K562 (cell line): ENCODE measurements at regions of chr19 and their contacts with region 1.

Region 1: DNA sequence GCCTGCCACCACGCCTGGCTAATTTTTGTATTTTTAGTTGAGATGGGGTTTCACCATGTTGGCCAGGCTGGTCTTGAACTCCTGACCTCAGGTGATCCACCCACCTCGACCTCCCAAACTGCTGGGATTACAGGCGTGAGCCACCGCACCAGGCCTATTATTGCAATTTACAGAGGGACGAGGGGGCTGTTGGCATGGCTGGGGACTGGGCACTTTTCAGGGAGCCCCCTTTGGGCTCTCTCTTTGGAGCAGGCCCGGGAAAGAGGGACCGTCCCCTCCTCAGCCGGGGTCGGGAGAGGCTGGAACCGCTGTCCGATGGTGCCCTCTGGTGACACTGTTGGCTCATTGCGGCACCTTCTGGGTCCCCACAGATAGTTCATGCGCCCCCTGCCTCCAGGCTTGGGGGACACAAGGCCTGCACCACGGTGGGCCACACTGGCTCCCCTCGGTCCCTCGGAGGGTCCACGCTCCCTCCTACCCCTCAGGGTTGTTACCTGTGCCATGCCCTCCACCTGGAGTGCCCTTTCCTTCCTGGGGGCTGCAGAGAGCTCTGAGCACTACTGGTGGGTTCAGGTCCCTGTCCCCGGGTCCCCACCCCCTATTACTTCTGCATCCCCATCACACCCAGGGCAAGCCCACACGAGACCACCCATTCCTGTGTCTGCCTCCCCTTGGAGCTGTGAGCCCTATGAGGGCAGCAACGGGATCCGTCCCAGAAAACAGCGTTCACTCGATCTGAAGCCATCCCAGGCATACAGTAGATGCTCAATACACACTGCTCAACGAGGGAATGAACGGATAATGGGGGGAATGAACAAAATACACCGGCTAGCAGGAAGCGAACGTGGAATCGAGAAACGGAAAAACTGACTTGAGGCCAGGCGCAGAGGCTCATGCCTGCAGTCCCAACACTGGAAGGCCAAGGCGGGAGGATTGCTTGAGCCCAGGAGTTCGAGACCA is 12.5 kb downstream of the FEM1A start:
- DNase-seq: peak; percentile 81 to 85 (median 83)
- ATAC-seq: peak; percentile 94
- H3K4me3 ChIP-seq: no peak overlapping the region
- H3K27ac ChIP-seq: no peak overlapping the region
- H3K4me1 ChIP-seq: peaks cover 0 to 14% of the 10 kb centered on the region in 2 experiments; a peak in 3 of 5 replicates
- H3K27me3 ChIP-seq: no peaks in the 10 kb centered on the region
- CTCF ChIP-seq: peak; percentile 94 to 99 (median 99)
- EP300 ChIP-seq: no peak
- POLR2A ChIP-seq: no peak
- RAD21 ChIP-seq: peak; percentile 70 to 92

Region 2: DNA sequence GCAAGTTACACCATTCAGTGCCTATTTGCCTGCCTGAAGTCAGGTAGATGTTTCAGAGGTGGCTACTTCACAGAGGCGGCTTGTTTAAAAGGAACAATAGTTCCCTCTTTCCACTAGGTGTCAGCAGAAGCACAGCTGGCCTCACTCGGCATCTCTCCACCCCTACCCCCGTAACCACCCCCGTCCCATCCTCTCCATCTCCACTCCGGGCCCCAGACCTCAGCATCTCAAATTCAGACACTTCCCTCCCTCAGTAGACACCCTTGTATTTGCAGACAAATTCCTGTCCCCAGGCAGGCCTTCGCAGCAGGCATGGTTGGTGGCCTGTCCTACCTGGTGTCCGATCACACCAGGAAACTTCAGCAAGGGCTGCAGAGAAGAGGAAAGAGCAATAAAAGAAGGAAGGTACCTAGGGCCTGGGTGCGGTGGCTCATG is 71.3 kb before region 1 on chr19:
- CTCF ChIA-PET with region 1: interaction called, 35 read pairs
- POLR2A ChIA-PET with region 1: no interaction called
- in situ Hi-C with region 1: no loop called
- intact Hi-C with region 1: loop called (anchors 1 kb)
- DNase-seq: peak; percentile 63 to 75 (median 72)
- ATAC-seq: peak; percentile 93
- H3K4me3 ChIP-seq: no peak overlapping the region
- H3K27ac ChIP-seq: no peak overlapping the region
- H3K4me1 ChIP-seq: peaks cover 2 to 5% of the 10 kb centered on the region in 2 experiments; a peak in 2 of 5 replicates
- H3K27me3 ChIP-seq: peaks cover 13% of the 10 kb centered on the region in 2 experiments; a peak in 4 of 5 replicates
- CTCF ChIP-seq: peak; percentile 69 to 90 (median 89)
- EP300 ChIP-seq: no peak
- POLR2A ChIP-seq: no peak
- RAD21 ChIP-seq: peak; percentile 67 to 81

Region 3: DNA sequence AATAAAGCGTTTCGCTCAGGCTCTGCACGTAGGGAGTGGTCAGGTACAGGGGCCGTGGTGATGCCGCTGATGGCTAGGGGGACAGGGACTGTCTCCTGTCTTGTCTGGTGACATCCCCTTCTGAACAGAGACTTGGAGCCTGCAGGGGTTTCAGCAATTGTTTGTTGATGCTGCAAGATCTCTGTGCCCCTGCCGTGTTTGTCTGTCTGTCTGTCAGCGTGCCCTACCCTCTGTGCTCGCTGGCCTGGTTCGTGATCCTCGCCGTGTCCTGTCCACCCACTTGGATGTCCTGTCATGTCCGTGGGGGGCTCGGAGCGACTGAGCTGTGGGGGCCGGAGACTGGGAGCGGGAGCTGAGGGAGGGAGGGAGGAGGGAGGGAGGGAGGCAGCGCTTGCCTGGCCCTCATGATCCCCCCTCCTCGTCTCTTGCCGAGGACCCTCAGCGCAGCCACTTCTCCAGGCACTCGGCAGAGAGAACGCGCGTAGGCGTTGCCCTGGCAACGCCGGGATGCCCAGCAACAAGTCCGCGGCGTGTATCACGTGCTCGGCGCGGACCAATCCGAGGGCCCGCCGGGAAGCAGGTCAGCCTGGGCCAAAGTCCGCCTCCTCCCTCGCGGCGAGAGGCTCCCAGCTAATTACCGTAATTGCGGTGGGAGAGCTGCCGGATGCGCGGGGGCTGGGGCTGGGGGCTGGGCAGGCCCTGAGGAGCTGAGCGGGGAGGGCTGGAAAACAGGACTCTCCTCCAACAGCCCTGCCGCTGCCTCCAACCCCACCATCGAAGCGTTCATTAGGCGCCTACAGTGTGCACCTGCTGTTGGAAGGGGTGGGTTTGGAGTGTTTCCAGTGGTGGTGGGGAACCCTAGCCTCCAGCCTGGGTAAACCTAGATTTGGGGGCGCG is 44.4 kb before region 1 on chr19:
- CTCF ChIA-PET with region 1: no interaction called
- POLR2A ChIA-PET with region 1: no interaction called
- in situ Hi-C with region 1: no loop called
- intact Hi-C with region 1: no loop called
- DNase-seq: peak; percentile 91 to 100 (median 100)
- ATAC-seq: peak; percentile 100
- H3K4me3 ChIP-seq: no peak overlapping the region; the same call in 1 of the 2 replicates
- H3K27ac ChIP-seq: no peak overlapping the region
- H3K4me1 ChIP-seq: peaks cover 0 to 10% of the 10 kb centered on the region in 2 experiments; a peak in 3 of 5 replicates
- H3K27me3 ChIP-seq: peaks cover 10 to 65% of the 10 kb centered on the region in 2 experiments; a peak in 4 of 5 replicates
- CTCF ChIP-seq: no peak
- EP300 ChIP-seq: no peak
- POLR2A ChIP-seq: no peak
- RAD21 ChIP-seq: no peak

Region 4: DNA sequence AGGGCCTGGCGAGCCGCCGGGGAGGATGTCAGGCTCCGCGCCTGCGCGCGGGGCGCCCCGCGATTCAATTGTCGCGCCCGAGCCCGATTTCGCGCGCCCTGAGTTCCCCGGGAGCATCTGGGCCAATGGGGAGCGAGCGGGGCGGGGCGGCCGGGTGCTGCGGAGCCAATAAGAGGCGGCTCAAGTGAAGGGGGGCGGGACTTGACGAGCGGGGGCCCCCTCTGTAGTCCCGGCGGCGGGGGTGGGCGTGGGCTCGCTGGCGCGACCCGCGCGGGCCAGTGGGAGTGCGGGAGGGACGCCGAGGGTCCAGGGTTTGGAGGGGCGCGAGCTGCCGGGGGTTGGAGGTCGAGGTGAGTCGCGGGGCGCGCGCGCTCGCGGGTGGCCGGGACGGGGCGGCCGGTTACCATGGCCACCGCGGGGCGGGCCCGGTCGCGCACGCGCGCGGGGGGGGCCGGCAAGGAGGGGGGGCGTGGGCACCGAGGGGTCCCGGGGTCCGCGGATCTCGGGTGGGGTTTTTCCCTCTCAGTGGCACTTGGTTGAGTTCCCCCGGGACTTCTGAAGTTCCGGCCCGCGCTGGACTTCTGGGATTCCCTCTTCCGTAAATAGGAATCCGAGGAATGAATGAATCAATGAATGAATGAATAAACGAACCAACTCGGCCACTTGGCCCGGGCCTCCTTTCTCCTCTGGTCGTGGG is 106.0 kb after region 1 on chr19:
- CTCF ChIA-PET with region 1: interaction called, 37 read pairs
- POLR2A ChIA-PET with region 1: interaction called, 4 read pairs
- in situ Hi-C with region 1: loop called (anchors 5 kb)
- intact Hi-C with region 1: loop called (anchors 1 kb)
- DNase-seq: peak; percentile 96 to 98 (median 96)
- ATAC-seq: peak; percentile 94
- H3K4me3 ChIP-seq: peak overlapping the region; percentile 93
- H3K27ac ChIP-seq: peak overlapping the region; percentile 87
- H3K4me1 ChIP-seq: peaks cover 33 to 46% of the 10 kb centered on the region in 2 experiments
- H3K27me3 ChIP-seq: no peaks in the 10 kb centered on the region
- CTCF ChIP-seq: no peak
- EP300 ChIP-seq: no peak
- POLR2A ChIP-seq: no peak
- RAD21 ChIP-seq: no peak

Region 5: DNA sequence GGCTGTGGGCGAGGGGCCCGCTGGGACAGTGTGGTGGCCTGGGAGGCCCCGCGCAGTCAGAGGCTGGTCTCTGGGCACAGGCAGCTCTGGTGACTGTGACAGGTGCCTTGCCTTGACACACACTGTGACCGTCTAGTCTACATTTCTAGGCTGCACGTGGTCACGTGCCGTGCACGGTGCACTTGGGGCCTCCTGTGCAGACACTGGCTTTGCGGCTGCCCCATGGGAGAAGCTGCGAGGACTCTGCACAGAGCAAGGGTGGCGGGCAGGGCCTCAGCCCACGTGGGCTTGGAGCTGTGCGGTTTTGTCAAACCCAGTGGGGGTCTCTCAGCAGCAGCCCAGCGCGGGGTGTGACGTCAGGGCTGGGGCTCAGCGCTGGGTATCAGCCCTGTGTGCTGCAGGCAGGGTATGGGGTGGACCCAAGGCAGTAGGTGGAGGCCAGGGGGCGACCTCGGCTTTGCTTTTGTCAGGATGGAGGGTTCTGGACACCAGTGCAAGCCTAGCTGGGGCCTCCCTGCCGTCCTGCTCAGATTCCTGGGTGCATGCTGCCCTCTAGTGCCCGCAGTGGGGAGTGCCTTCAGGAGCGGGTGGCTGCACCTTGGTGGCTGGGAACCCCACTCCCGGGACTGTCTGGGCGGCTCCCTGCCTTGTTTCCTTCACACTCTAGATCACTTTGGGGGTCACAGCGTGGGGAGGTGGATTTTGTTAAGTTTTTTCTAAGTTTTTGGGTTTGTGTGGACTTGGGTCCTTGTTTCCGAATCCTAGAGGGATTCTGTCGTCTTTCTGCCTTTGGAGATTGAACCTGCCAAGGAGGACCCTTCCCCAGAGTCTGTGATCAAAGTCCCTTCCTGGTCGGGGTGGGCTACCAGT is 227.4 kb after region 1 on chr19:
- CTCF ChIA-PET with region 1: interaction called, 47 read pairs
- POLR2A ChIA-PET with region 1: no interaction called
- in situ Hi-C with region 1: loop called (anchors 5 kb)
- intact Hi-C with region 1: loop called (anchors 1 kb)
- DNase-seq: peak; percentile 85 to 92 (median 90)
- ATAC-seq: peak; percentile 97
- H3K4me3 ChIP-seq: no peak overlapping the region
- H3K27ac ChIP-seq: no peak overlapping the region
- H3K4me1 ChIP-seq: peaks cover 0 to 46% of the 10 kb centered on the region in 2 experiments; a peak in 3 of 5 replicates
- H3K27me3 ChIP-seq: no peaks in the 10 kb centered on the region
- CTCF ChIP-seq: peak; percentile 92 to 94 (median 94)
- EP300 ChIP-seq: no peak
- POLR2A ChIP-seq: no peak
- RAD21 ChIP-seq: peak; percentile 75 to 87